Activated T-helper 2 cell treated with anti-CD3 and anti-CD28 coated beads, Interferon-gamma antibody, Interleukin-2, Interleukin-4, amounts not matched to agents 10 μg/mL and 5 μg/mL and 100 μg/mL, durations not matched to agents 14 hours and 24 hours and 36 hours (primary cell): ENCODE measurements at regions of chr2 and their contacts with region 1.

Region 1: GRCh38 chr2:187453078-187453641 is 5.1 kb upstream of the CALCRL start:
- DNase-seq: no peak
- H3K4me3 Mint-ChIP-seq: no peak overlapping the region
- H3K27ac Mint-ChIP-seq: no peak overlapping the region
- H3K4me1 Mint-ChIP-seq: peaks cover 6% of the 10 kb centered on the region
- H3K27me3 Mint-ChIP-seq: no peaks in the 10 kb centered on the region

Region 2: GRCh38 chr2:186862869-186863709 is 590.1 kb before region 1 on chr2:
- intact Hi-C with region 1: loop called (anchors 5 kb)
- DNase-seq: no peak
- H3K4me3 Mint-ChIP-seq: no peak overlapping the region
- H3K27ac Mint-ChIP-seq: no peak overlapping the region
- H3K4me1 Mint-ChIP-seq: no peaks in the 10 kb centered on the region
- H3K27me3 Mint-ChIP-seq: no peaks in the 10 kb centered on the region

Region 3: GRCh38 chr2:187174582-187174981 is 278.6 kb before region 1 on chr2:
- intact Hi-C with region 1: loop called (anchors 10 kb)
- DNase-seq: no peak
- H3K4me3 Mint-ChIP-seq: no peak overlapping the region
- H3K27ac Mint-ChIP-seq: no peak overlapping the region
- H3K4me1 Mint-ChIP-seq: no peaks in the 10 kb centered on the region
- H3K27me3 Mint-ChIP-seq: no peaks in the 10 kb centered on the region

Region 4: DNA sequence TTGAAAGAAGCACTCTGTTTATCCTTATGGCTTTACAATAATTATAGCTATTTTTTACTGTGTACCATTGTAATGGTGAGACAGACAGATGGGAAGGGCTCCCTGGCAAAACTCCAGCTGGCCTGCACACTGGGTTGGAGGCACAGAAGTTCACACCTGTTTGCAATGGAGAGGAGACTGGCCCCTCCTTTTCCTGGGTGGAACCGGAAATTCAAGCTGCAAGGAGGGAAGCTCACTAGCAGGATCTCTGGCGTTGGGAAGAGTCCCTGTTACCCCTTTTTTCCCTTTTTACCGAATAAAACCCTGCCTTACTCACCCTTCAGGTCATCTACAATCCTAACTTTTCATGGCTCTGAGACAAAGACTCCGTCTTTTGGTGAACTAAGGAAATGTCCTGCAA is 201.4 kb after region 1 on chr2:
- intact Hi-C with region 1: no loop called
- DNase-seq: no peak
- H3K4me3 Mint-ChIP-seq: no peak overlapping the region
- H3K27ac Mint-ChIP-seq: no peak overlapping the region
- H3K4me1 Mint-ChIP-seq: no peaks in the 10 kb centered on the region
- H3K27me3 Mint-ChIP-seq: no peaks in the 10 kb centered on the region

Region 5: DNA sequence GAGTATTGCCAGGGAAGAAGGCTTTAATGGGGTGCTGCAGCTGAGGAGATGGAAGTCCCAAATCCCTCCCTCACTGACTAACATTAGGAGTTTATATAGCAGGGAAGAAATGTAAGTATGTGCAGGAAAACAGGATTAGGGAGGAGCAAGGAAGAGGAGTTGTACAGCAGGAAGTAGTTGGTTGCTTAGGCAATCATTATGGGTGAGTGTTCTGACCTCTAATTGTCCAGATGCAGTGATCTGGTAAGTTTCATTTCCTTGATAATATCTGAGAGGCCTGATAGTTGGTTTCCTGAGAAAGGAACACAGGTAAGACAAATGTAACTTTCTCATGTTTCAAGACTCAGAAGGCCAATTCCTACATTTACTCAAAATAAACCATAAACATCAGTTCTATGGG is 506.7 kb after region 1 on chr2:
- intact Hi-C with region 1: no loop called
- DNase-seq: no peak
- H3K4me3 Mint-ChIP-seq: no peak overlapping the region
- H3K27ac Mint-ChIP-seq: no peak overlapping the region
- H3K4me1 Mint-ChIP-seq: peaks cover 5% of the 10 kb centered on the region
- H3K27me3 Mint-ChIP-seq: no peaks in the 10 kb centered on the region